CD4-positive, alpha-beta T cell (primary cell): ENCODE measurements at regions of chr11 and their contacts with region 1.

Region 1: GRCh38 chr11:103035791-103036434 is 56.0 kb downstream of the DCUN1D5 start:
- DNase-seq: peak in 8 of 14 experiments; percentile 0 to 87 (median 32)
- ATAC-seq: peak; percentile 96
- H3K4me3 ChIP-seq: no peak overlapping the region
- H3K4me3 Mint-ChIP-seq: no peak overlapping the region
- H3K27ac ChIP-seq: no peak overlapping the region
- H3K27ac Mint-ChIP-seq: peak overlapping the region; percentile 29
- H3K4me1 ChIP-seq: no peaks in the 10 kb centered on the region
- H3K4me1 Mint-ChIP-seq: peaks cover 6% of the 10 kb centered on the region
- H3K27me3 ChIP-seq: no peaks in the 10 kb centered on the region
- H3K27me3 Mint-ChIP-seq: no peaks in the 10 kb centered on the region
- CTCF ChIP-seq: peak; percentile 70

Region 2: GRCh38 chr11:103055221-103055890 is 19.4 kb after region 1 on chr11:
- CTCF ChIA-PET with region 1: interaction called, 6 read pairs
- POLR2A ChIA-PET with region 1: no interaction called
- intact Hi-C with region 1: loop called in 1 of 2 experiments (anchors 1 kb)
- DNase-seq: peak in 3 of 14 experiments; percentile 39 to 52 (median 43)
- ATAC-seq: peak; percentile 54
- H3K4me3 ChIP-seq: no peak overlapping the region
- H3K4me3 Mint-ChIP-seq: no peak overlapping the region
- H3K27ac ChIP-seq: no peak overlapping the region
- H3K27ac Mint-ChIP-seq: no peak overlapping the region
- H3K4me1 ChIP-seq: no peaks in the 10 kb centered on the region
- H3K4me1 Mint-ChIP-seq: no peaks in the 10 kb centered on the region
- H3K27me3 ChIP-seq: no peaks in the 10 kb centered on the region
- H3K27me3 Mint-ChIP-seq: no peaks in the 10 kb centered on the region
- CTCF ChIP-seq: peak; percentile 68